Calu3 (cell line): ENCODE measurements at regions of chr5 and their contacts with region 1.

Region 1: GRCh38 chr5:145509336-145510150 is 325.6 kb downstream of the PRELID2 start:
- DNase-seq: no peak
- H3K4me3 Mint-ChIP-seq: no peak overlapping the region
- H3K27ac Mint-ChIP-seq: peak overlapping the region; percentile 72
- H3K4me1 Mint-ChIP-seq: peaks cover 26% of the 10 kb centered on the region
- H3K27me3 Mint-ChIP-seq: no peaks in the 10 kb centered on the region
- CTCF ChIP-seq: no peak

Region 2: DNA sequence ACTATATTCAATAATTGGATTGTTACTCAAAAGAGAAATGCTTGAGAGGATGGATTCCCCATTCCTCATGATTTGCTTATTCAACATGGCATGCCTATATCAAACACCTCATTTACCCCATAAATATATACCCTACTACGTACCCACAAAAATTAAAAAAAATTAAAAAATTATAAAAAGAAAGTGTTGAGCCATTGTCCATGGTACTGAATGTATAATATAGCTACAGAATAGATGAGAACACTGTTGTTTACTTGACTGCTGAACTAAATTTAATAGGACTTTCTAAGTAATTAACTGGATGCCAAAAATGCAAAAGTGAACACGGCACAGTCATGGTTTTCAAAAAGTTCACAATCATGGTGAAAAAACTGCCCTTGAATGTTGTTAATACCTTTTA is 613.1 kb before region 1 on chr5:
- CTCF ChIA-PET with region 1: no interaction called
- intact Hi-C with region 1: no loop called
- DNase-seq: no peak
- H3K4me3 Mint-ChIP-seq: no peak overlapping the region
- H3K27ac Mint-ChIP-seq: no peak overlapping the region
- H3K4me1 Mint-ChIP-seq: no peaks in the 10 kb centered on the region
- H3K27me3 Mint-ChIP-seq: no peaks in the 10 kb centered on the region
- CTCF ChIP-seq: no peak

Region 3: GRCh38 chr5:145307866-145308382 is 201.6 kb before region 1 on chr5:
- CTCF ChIA-PET with region 1: no interaction called
- intact Hi-C with region 1: no loop called
- DNase-seq: no peak
- H3K4me3 Mint-ChIP-seq: no peak overlapping the region
- H3K27ac Mint-ChIP-seq: no peak overlapping the region
- H3K4me1 Mint-ChIP-seq: no peaks in the 10 kb centered on the region
- H3K27me3 Mint-ChIP-seq: no peaks in the 10 kb centered on the region
- CTCF ChIP-seq: no peak

Region 4: GRCh38 chr5:145471831-145472612 is 37.5 kb before region 1 on chr5:
- CTCF ChIA-PET with region 1: no interaction called
- intact Hi-C with region 1: loop called (anchors 1 kb)
- DNase-seq: peak; percentile 47
- H3K4me3 Mint-ChIP-seq: no peak overlapping the region
- H3K27ac Mint-ChIP-seq: peak overlapping the region; percentile 22
- H3K4me1 Mint-ChIP-seq: peaks cover 32% of the 10 kb centered on the region
- H3K27me3 Mint-ChIP-seq: no peaks in the 10 kb centered on the region
- CTCF ChIP-seq: no peak

Region 5: DNA sequence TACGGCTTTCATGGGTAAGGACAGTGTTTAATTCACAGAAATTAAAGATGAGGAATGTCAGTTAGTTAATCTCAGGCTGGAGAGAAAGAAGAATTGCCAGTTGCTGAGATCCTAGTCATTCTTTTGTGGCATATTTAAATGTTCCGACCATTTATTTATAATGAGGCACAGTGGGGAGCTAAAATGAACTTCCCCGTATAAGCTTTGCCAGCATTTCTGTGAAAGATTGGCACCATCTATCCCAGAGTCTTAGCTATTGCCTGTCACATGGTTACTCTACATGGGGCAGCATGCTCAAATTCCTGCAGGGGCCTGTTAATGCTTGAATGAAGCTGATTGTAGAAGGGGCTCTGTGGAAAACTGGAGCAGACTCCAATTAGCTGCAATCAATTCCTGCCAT is 11.5 kb after region 1 on chr5:
- CTCF ChIA-PET with region 1: no interaction called
- intact Hi-C with region 1: no loop called
- DNase-seq: no peak
- H3K4me3 Mint-ChIP-seq: no peak overlapping the region
- H3K27ac Mint-ChIP-seq: no peak overlapping the region
- H3K4me1 Mint-ChIP-seq: peaks cover 9% of the 10 kb centered on the region
- H3K27me3 Mint-ChIP-seq: no peaks in the 10 kb centered on the region
- CTCF ChIP-seq: no peak

Region 6: DNA sequence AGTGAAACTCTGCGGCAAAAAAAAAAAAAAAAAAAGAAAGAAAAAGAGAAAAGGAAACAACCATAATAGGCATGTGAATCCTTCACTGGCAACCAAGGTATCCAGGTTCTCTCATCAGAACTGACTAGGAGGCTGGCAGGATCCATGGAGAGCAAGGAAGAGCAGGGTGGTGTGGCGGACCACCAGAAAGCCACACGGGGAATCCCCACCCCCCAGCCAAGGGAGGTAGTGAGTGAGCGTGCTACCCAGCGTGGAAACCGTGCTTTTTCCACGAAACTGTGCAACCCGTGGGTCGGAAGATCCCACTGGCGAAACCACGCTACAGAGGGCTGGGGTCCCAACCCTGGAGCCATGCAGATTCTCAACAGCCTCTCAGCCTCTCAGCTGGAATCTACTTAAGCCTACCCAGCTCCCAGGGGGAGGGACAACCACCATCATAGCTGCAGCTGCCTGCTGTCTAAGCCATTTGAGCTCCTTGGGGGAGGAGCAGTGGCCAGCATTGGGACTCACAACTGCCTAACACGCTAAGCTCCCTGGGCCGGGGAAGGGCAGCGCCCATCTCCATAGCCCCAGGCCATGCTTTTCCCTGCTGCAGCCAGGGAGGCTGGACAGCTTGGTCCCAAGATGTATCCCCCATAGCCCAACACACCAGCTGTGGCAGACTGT is 234.0 kb after region 1 on chr5:
- CTCF ChIA-PET with region 1: no interaction called
- intact Hi-C with region 1: no loop called
- DNase-seq: no peak
- H3K4me3 Mint-ChIP-seq: no peak overlapping the region
- H3K27ac Mint-ChIP-seq: no peak overlapping the region
- H3K4me1 Mint-ChIP-seq: no peaks in the 10 kb centered on the region
- H3K27me3 Mint-ChIP-seq: no peaks in the 10 kb centered on the region
- CTCF ChIP-seq: no peak